Mammary epithelial cell (primary cell): ENCODE measurements at regions of chr1 and their contacts with region 1.

Region 1: DNA sequence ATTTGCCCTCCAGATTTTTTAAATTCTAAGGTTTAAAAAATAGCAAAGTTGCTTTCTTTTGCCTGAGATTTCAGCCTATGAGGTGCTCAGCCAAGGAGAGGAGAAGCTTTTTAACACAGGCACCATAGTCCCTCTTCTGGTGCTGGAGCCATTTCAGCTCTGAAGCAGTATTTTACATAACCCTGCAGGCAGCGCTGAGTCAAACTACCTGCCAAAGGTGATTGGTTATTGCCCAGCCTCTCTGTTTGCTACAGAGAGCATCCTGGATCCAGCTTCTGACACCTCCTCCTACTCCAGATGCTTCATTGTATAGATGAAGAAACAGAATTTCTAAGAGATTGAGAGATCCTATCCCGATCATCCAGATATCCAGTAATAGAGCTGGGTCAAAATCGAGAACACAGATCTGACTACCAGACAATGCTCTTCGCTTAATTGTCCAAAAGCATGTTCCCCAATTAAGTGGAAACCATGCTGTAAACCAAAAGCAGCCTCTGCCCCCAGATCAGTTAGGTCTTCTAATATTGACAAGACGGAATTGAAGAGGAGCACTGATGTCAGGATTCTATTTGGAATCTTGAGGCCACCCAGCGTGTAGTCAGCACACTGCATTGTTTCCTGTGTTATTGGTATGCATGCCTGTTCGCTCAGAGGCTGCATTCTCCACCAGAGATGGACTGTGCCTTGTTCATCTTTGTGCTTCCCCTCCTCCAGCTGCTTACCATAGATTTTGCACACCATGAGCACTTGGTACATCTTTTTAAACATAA is 22.1 kb downstream of the RGS8 start:
- DNase-seq: no peak
- H3K4me3 ChIP-seq: no peak overlapping the region
- H3K27ac ChIP-seq: no peak overlapping the region
- H3K4me1 ChIP-seq: no peaks in the 10 kb centered on the region
- H3K27me3 ChIP-seq: peaks cover 5% of the 10 kb centered on the region
- CTCF ChIP-seq: no peak

Region 2: DNA sequence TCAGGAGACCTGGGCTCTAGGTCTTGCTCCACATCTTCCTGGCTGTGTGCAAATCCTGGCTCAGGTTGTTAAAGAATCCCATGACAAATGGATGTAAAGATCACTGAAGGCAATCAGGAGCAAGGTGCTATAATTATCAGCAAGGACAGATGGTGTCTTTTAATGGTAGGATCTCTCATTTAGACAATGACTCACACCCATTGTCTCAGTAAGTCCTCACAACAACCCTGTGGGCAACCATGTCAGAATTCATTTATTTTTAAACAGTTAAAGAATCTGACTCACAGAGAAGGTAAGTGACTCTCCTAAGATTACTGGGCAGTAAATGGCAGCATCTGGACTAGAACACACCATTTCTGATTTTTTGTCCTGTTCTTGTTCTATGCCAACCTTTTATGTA is 106.0 kb before region 1 on chr1:
- CTCF ChIA-PET with region 1: no interaction called
- dilution Hi-C with region 1: no loop called
- in situ Hi-C with region 1: no loop called
- intact Hi-C with region 1: no loop called
- DNase-seq: peak; percentile 61
- H3K4me3 ChIP-seq: no peak overlapping the region
- H3K27ac ChIP-seq: no peak overlapping the region
- H3K4me1 ChIP-seq: peaks cover 12% of the 10 kb centered on the region
- H3K27me3 ChIP-seq: no peaks in the 10 kb centered on the region
- CTCF ChIP-seq: no peak

Region 3: GRCh38 chr1:182707122-182707521 is 44.8 kb after region 1 on chr1:
- CTCF ChIA-PET with region 1: no interaction called
- dilution Hi-C with region 1: loop called (anchors 5 kb)
- in situ Hi-C with region 1: no loop called
- intact Hi-C with region 1: no loop called
- DNase-seq: no peak
- H3K4me3 ChIP-seq: no peak overlapping the region
- H3K27ac ChIP-seq: no peak overlapping the region
- H3K4me1 ChIP-seq: no peaks in the 10 kb centered on the region
- H3K27me3 ChIP-seq: no peaks in the 10 kb centered on the region
- CTCF ChIP-seq: no peak

Region 4: GRCh38 chr1:182771187-182771984 is 109.1 kb after region 1 on chr1:
- CTCF ChIA-PET with region 1: no interaction called
- dilution Hi-C with region 1: no loop called
- in situ Hi-C with region 1: no loop called
- intact Hi-C with region 1: no loop called
- DNase-seq: no peak
- H3K4me3 ChIP-seq: no peak overlapping the region
- H3K27ac ChIP-seq: no peak overlapping the region
- H3K4me1 ChIP-seq: no peaks in the 10 kb centered on the region
- H3K27me3 ChIP-seq: no peaks in the 10 kb centered on the region
- CTCF ChIP-seq: peak in 1 of 2 donors; percentile 25